CD8-positive, alpha-beta memory T cell (primary cell): ENCODE measurements at regions of chr2 and their contacts with region 1.

Region 1: GRCh38 chr2:177129610-177130009 is 83.0 kb upstream of the HNRNPA3 start:
- DNase-seq: no peak
- H3K4me3 ChIP-seq: no peak overlapping the region
- H3K4me3 Mint-ChIP-seq: no peak overlapping the region
- H3K27ac ChIP-seq: no peak overlapping the region
- H3K27ac Mint-ChIP-seq: no peak overlapping the region
- H3K4me1 ChIP-seq: no peaks in the 10 kb centered on the region
- H3K4me1 Mint-ChIP-seq: peaks cover 0 to 3% (median 1%) of the 10 kb centered on the region in 3 donors
- H3K27me3 ChIP-seq: no peaks in the 10 kb centered on the region
- H3K27me3 Mint-ChIP-seq: peaks cover 8 to 30% of the 10 kb centered on the region in 2 donors

Region 2: DNA sequence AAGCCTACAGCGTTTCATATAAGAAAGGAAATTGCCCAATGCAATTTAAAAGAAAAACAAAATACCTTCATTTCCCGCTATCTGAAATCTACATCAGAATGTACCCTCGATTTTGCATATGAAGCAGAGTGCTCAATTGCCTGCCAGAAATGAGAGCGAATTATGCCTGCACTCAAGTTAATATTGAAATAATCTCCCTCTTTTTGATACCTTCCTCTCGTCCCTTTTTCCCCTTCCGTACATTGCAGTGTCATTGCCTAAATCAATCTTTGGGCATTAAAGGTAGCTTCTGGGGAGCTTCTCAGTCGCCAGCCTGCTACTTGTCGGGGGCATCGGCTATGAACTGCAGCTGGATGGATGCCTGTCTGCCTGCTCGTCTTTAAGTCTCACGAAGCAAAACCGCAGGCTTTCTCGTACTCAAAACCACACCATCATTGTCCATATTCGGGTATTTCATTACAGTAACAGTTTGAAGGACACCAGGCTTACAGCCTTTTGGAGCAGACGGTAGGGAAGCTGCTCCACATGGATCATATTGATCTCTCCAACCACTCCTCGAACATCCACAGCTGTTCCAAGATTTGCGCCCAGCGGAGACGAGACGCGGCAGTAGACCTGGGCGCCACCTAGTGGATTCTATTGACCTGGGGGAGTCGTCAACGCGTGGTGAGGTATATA is 19.0 kb after region 1 on chr2:
- CTCF ChIA-PET with region 1: interaction called, 10 read pairs
- POLR2A ChIA-PET with region 1: no interaction called
- DNase-seq: peak; percentile 60 to 78 (median 63)
- H3K4me3 ChIP-seq: peak overlapping the region; percentile 71
- H3K4me3 Mint-ChIP-seq: peak overlapping the region; percentile 70 to 92 (median 89)
- H3K27ac ChIP-seq: no peak overlapping the region
- H3K27ac Mint-ChIP-seq: peak overlapping the region in 7 of 8 donors; percentile 14 to 82 (median 67)
- H3K4me1 ChIP-seq: peaks cover 9% of the 10 kb centered on the region
- H3K4me1 Mint-ChIP-seq: peaks cover 9 to 19% (median 18%) of the 10 kb centered on the region in 3 donors
- H3K27me3 ChIP-seq: peaks cover 29% of the 10 kb centered on the region
- H3K27me3 Mint-ChIP-seq: peaks cover 13 to 29% of the 10 kb centered on the region in 2 donors